ENCODE measurements at regions of chr7 and their contacts with region 1.

Region 1: GRCh38 chr7:83769407-83769806 is 120.5 kb upstream of the SEMA3E start:
- DNase-seq: no peak
- ATAC-seq: no peak
- H3K4me3 ChIP-seq: no peak overlapping the region
- H3K27ac ChIP-seq: no peak overlapping the region
- H3K4me1 ChIP-seq: no peaks in the 10 kb centered on the region
- H3K27me3 ChIP-seq: no peaks in the 10 kb centered on the region
- CTCF ChIP-seq: no peak
- POLR2A ChIP-seq: no peak
- RAD21 ChIP-seq: no peak

Region 2: DNA sequence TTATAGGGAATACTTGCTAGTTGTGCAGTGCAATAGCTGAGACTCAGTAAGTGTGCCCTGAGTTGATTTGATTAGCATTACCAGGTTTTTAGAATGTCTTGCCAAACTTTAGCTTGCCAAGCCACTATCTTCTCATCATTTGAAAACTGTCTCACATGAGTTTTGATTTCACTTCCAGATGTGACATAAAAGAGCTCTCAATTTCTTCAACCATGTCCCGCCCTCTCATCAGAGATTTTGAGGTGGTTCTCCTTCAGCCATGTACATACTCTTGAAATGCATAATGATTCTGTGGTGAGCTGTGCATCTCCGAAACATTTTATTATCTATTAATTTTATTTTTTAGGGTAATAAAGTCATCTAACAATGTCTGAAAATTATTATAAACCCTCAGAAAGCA is 94.5 kb after region 1 on chr7:
- CTCF ChIA-PET with region 1: no interaction called
- POLR2A ChIA-PET with region 1: no interaction called
- dilution Hi-C with region 1: no loop called
- in situ Hi-C with region 1: no loop called
- intact Hi-C with region 1: loop called (anchors 5 kb)
- DNase-seq: no peak
- ATAC-seq: no peak
- H3K4me3 ChIP-seq: no peak overlapping the region
- H3K27ac ChIP-seq: no peak overlapping the region
- H3K4me1 ChIP-seq: no peaks in the 10 kb centered on the region
- H3K27me3 ChIP-seq: no peaks in the 10 kb centered on the region
- CTCF ChIP-seq: no peak
- POLR2A ChIP-seq: no peak
- RAD21 ChIP-seq: no peak

Region 3: GRCh38 chr7:84271543-84271942 is 502.1 kb after region 1 on chr7:
- CTCF ChIA-PET with region 1: no interaction called
- POLR2A ChIA-PET with region 1: no interaction called
- dilution Hi-C with region 1: no loop called
- in situ Hi-C with region 1: no loop called
- intact Hi-C with region 1: no loop called
- DNase-seq: peak; percentile 45
- ATAC-seq: no peak
- H3K4me3 ChIP-seq: no peak overlapping the region
- H3K27ac ChIP-seq: no peak overlapping the region
- H3K4me1 ChIP-seq: 0 out of 2 replicates have a peak, but pooled peaks cover 1% of the 10 kb centered on the region
- H3K27me3 ChIP-seq: no peaks in the 10 kb centered on the region
- CTCF ChIP-seq: no peak
- POLR2A ChIP-seq: no peak
- RAD21 ChIP-seq: no peak